Naive thymus-derived CD4-positive, alpha-beta T cell (primary cell): ENCODE measurements at regions of chr10 and their contacts with region 1.

Region 1: GRCh38 chr10:4819707-4820106 is 6.3 kb upstream of the AKR1E2 start:
- DNase-seq: no peak
- ATAC-seq: peak; percentile 21
- H3K4me3 ChIP-seq: no peak overlapping the region
- H3K4me3 Mint-ChIP-seq: no peak overlapping the region
- H3K27ac ChIP-seq: no peak overlapping the region
- H3K27ac Mint-ChIP-seq: no peak overlapping the region
- H3K4me1 ChIP-seq: no peaks in the 10 kb centered on the region
- H3K4me1 Mint-ChIP-seq: peaks cover 0 to 3% (median 0%) of the 10 kb centered on the region in 7 donors
- H3K27me3 ChIP-seq: no peaks in the 10 kb centered on the region
- H3K27me3 Mint-ChIP-seq: peaks cover 0 to 56% (median 13%) of the 10 kb centered on the region in 5 donors

Region 2: DNA sequence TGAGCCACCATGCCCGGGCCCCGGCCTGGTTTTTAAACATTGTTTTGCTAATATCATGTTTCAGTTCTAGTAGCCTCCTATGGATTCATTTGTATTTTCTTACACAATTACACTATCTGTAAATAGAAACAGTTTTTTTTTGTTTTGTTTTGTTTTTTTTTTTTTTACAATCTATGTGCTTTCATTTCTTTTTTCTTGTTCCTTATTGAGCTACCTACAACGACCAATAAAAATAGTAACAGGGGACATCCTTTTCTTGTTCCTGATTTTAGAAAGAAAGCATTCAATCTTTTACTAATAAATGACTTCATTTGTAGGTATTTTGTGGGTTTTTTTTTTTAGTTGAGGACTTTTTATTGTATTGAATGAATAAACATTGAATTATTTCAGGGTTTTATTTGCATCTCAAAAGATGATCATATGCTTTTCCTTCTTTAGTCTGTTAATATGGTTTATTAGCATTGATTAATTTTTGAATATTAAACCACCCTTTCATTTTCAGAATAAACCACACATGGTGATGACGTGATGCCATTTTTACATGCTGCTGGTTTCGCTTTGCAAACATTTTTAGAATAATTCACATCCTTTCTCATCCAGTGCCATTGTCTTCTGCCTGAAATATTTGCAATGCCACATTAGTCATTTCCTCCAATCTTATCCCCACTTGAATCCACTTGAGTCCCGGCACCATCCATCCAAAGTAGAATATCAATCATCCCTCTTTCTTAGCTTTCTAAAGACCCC is 11.8 kb before region 1 on chr10:
- CTCF ChIA-PET with region 1: no interaction called
- POLR2A ChIA-PET with region 1: no interaction called
- intact Hi-C with region 1: no loop called
- DNase-seq: no peak
- ATAC-seq: no peak
- H3K4me3 ChIP-seq: no peak overlapping the region
- H3K4me3 Mint-ChIP-seq: no peak overlapping the region
- H3K27ac ChIP-seq: no peak overlapping the region
- H3K27ac Mint-ChIP-seq: no peak overlapping the region
- H3K4me1 ChIP-seq: no peaks in the 10 kb centered on the region
- H3K4me1 Mint-ChIP-seq: peaks cover 0 to 2% (median 0%) of the 10 kb centered on the region in 7 donors
- H3K27me3 ChIP-seq: no peaks in the 10 kb centered on the region
- H3K27me3 Mint-ChIP-seq: peaks cover 0 to 22% (median 8%) of the 10 kb centered on the region in 5 donors

Region 3: DNA sequence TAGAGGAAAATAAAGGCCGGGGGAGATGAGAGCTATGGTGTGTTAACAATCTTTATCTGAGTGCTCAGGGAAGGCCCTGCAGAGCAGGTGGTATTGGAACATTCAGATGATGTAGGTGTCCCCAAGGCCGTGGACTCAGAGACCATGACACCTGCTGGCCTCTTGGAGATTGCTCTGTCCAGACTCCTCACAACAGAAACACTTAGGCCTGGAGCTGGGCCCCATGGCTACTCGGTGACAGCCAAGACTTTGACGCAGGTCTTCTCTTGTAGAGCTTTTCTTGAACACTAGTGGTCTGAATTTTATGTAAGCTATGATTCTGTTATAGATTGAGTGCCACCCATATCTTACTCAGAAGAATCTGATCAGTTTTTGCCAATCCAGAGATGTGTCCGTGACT is 19.7 kb after region 1 on chr10:
- CTCF ChIA-PET with region 1: interaction called, 34 read pairs
- POLR2A ChIA-PET with region 1: interaction called, 24 read pairs
- intact Hi-C with region 1: loop called in 1 of 2 experiments (anchors 2 kb)
- DNase-seq: no peak
- ATAC-seq: no peak
- H3K4me3 ChIP-seq: no peak overlapping the region
- H3K4me3 Mint-ChIP-seq: no peak overlapping the region
- H3K27ac ChIP-seq: no peak overlapping the region
- H3K27ac Mint-ChIP-seq: peak overlapping the region in 7 of 9 donors; percentile 9 to 71 (median 16)
- H3K4me1 ChIP-seq: peaks cover 0 to 36% of the 10 kb centered on the region in 2 donors
- H3K4me1 Mint-ChIP-seq: peaks cover 17 to 48% (median 30%) of the 10 kb centered on the region in 7 donors
- H3K27me3 ChIP-seq: no peaks in the 10 kb centered on the region
- H3K27me3 Mint-ChIP-seq: peaks cover 0 to 3% (median 0%) of the 10 kb centered on the region in 5 donors

Region 4: DNA sequence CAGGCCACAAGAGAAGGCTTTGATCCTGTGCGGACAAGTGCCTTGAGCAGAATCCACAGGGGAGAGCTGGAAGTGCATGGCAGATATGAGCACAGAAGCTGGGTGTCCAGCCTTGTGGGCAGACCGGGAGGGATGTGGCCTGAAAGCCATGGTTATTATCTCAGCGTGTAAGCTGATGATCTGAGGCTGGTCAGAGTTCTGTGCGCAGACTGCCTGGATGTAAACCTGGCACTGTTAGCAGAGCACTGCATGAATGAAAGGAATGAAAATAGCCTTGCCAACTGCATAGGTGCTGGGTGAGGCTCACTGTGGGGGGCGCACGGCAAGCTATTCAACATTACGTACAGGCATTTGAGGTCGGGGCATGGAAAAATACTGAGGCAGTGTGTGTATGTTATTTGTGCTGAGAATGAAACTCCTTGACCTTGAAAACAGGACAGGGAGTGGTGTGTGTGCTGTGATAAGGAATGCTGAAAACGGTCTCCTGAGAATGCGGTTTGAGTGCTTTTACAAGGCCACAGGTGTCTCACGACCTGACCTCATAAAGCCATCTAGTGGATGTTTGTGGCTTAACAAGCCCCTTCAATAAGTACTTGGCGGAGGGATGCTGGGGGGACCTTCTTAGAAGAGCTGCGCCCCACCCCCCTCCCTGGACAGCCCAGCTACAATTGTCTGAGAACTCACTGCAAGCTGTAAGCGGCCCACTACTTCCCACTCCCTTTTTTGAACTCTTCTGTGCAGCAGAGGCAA is 162.2 kb after region 1 on chr10:
- CTCF ChIA-PET with region 1: interaction called, 15 read pairs
- POLR2A ChIA-PET with region 1: no interaction called
- intact Hi-C with region 1: loop called (anchors 1 to 5 kb)
- DNase-seq: peak in 2 of 9 donors; percentile 3 to 18
- ATAC-seq: no peak
- H3K4me3 ChIP-seq: no peak overlapping the region
- H3K4me3 Mint-ChIP-seq: no peak overlapping the region
- H3K27ac ChIP-seq: no peak overlapping the region
- H3K27ac Mint-ChIP-seq: peak overlapping the region in 1 of 9 donors; percentile 67
- H3K4me1 ChIP-seq: no peaks in the 10 kb centered on the region
- H3K4me1 Mint-ChIP-seq: peaks cover 0 to 9% (median 0%) of the 10 kb centered on the region in 7 donors
- H3K27me3 ChIP-seq: no peaks in the 10 kb centered on the region
- H3K27me3 Mint-ChIP-seq: peaks cover 0 to 5% (median 0%) of the 10 kb centered on the region in 5 donors